ENCODE measurements at regions of chr13 and their contacts with region 1.

Region 1: DNA sequence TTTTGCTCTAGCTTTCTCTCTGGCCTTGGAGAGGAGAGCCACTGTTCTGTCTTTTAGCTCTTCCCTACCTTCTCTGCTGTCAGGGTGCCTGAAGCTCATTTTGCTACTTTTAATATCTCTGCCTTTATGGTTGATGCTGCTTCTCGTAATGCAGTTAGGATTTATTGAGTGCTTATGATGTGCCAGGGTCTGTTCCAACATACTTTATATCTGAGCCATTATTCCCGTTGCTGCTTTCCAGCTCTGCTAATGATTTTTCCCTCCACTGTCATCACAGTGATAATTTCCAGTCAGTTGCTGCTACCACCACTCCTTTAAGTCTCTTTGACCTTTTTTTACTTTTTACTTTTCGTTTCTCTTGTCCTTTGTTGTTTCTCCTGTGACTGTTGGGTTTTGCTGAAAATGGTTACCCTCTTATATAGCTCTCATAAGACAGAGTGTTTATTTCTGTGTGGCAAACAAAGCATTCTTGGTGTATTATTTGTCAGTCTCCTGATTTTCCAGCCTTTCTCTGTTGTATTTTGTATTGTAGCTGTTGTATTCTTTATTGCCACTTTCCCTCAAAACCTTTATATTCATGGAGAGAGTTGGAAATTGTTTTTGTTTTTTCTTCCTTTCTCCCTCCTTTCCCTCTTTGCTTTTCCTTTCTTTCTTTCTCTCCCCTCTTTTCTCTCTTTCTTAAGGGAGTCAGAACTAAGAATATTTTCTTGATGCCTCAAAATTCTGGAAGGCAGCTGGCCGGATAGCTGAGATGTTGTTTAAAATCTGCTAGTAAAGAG is 37.4 kb downstream of the COG6 start:
- DNase-seq: no peak
- H3K4me3 ChIP-seq: peak overlapping the region in 1 of 4 donors; percentile 9
- H3K27ac ChIP-seq: peak overlapping the region in 2 of 4 donors; percentile 63 to 70
- H3K4me1 ChIP-seq: peaks cover 0 to 18% (median 14%) of the 10 kb centered on the region in 4 donors
- H3K27me3 ChIP-seq: no peaks in the 10 kb centered on the region
- CTCF ChIP-seq: no peak
- EP300 ChIP-seq: peak in 1 of 4 donors; percentile 65
- POLR2A ChIP-seq: no peak

Region 2: DNA sequence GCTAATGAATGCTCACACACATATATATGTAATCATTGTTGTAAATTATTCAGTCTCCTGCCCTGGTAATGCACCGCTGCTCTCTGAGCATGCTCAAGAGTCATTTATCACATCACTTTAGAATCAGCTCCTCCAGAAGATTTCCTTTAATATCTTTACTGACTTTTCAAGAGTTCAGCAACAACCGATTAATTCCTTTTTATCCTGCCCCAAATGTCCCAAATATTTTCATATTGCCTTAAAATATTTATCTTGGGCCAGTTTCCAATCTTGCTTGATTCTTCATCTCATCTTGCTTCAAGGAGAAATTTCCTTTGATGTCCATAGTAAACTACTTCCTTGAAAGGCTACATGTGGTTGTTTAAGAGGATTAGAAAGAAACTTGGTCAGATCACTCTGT is 522.1 kb before region 1 on chr13:
- intact Hi-C with region 1: no loop called
- DNase-seq: no peak
- H3K4me3 ChIP-seq: no peak overlapping the region
- H3K27ac ChIP-seq: no peak overlapping the region
- H3K4me1 ChIP-seq: no peaks in the 10 kb centered on the region
- H3K27me3 ChIP-seq: no peaks in the 10 kb centered on the region
- CTCF ChIP-seq: no peak
- EP300 ChIP-seq: no peak
- POLR2A ChIP-seq: no peak

Region 3: GRCh38 chr13:39888865-39889810 is 196.3 kb after region 1 on chr13:
- intact Hi-C with region 1: loop called (anchors 10 kb)
- DNase-seq: no peak
- H3K4me3 ChIP-seq: no peak overlapping the region
- H3K27ac ChIP-seq: peak overlapping the region in 2 of 4 donors; percentile 26 to 34
- H3K4me1 ChIP-seq: peaks cover 0 to 32% (median 16%) of the 10 kb centered on the region in 4 donors
- H3K27me3 ChIP-seq: no peaks in the 10 kb centered on the region
- CTCF ChIP-seq: no peak
- EP300 ChIP-seq: no peak
- POLR2A ChIP-seq: no peak

Measured in sigmoid colon (tissue), 7 donors.